ENCODE measurements at regions of chr6 and their contacts with region 1.

Region 1: DNA sequence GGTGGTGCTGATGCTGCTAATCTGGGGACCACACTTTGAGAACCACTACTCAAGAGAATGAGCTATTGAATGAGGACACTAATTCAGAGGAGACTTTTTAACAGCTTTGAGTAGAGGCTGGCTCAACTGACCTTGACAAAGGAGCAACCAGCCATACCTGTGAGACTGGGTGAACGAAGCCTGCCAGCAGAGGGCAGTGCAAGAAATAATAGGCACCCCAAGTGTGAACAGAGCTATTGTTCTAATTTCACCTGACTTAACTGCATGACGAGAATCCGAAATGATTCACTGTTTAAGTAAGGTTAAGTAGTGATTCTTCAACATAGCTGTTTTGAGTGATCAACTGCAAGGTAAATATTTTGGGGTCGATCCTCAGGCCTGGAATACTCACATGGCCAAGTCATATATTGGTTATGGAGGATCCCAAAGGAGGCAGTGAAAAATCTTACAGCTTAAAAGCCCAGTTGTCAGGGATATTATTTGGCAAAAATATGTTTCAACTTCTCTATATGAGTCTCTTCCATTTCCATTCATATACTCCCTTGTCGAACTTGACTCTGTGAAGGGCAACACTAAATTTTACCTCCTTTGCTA is 550.5 kb upstream of the MARCKS start:
- DNase-seq: peak; percentile 57
- ATAC-seq: peak; percentile 100
- H3K4me3 ChIP-seq: no peak overlapping the region
- H3K27ac ChIP-seq: no peak overlapping the region
- H3K4me1 ChIP-seq: no peaks in the 10 kb centered on the region
- H3K27me3 ChIP-seq: no peaks in the 10 kb centered on the region
- CTCF ChIP-seq: peak; percentile 79 to 83 (median 81)
- EP300 ChIP-seq: no peak
- POLR2A ChIP-seq: no peak
- RAD21 ChIP-seq: peak; percentile 81

Region 2: GRCh38 chr6:112780498-112781096 is 526.1 kb before region 1 on chr6:
- CTCF ChIA-PET with region 1: interaction called, 3 read pairs
- POLR2A ChIA-PET with region 1: no interaction called
- RAD21 ChIA-PET with region 1: no interaction called
- SMC1A ChIA-PET with region 1: interaction called, 6 read pairs
- in situ Hi-C with region 1: no loop called
- intact Hi-C with region 1: loop called (anchors 2 kb)
- DNase-seq: peak; percentile 24
- ATAC-seq: peak; percentile 99
- H3K4me3 ChIP-seq: no peak overlapping the region
- H3K27ac ChIP-seq: no peak overlapping the region
- H3K4me1 ChIP-seq: no peaks in the 10 kb centered on the region
- H3K27me3 ChIP-seq: no peaks in the 10 kb centered on the region
- CTCF ChIP-seq: peak; percentile 67 to 82 (median 69)
- EP300 ChIP-seq: no peak
- POLR2A ChIP-seq: no peak
- RAD21 ChIP-seq: peak; percentile 95

Region 3: DNA sequence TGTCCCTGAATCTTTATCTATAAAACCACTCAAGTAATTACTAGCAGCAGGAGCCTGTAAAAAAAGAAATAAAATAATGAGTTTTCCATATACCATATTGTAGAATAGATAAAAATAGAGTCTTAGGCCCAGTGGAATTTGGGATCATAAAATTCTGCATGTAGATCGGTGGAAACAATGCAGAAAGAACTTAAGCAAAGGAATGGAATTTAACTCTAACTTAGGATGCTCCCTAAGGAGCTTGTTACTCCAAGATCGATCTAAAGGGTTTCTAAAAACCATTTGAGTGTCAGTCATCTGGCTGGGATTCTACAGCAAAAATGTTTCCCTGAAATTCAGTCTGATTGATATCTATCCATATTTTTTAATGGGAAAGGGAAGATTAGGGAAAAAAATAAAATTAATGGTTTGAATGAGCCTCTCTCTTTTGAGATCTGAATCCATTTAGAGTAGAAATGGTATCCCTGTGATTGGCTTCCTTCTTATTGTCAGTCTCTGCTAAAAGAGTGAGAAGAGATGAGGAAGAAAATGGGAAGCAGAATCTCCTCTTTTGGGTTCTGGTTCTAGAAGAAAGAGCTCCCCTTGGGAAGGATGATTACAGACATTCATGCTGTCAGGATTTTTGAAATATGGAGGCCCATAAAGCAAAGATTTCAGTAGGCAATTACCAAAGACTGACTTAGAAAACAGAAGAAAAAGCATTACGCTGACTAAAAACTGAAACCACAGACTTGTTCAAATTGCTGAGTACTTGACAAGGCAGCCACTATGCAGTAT is 13.8 kb before region 1 on chr6:
- CTCF ChIA-PET with region 1: interaction called, 17 read pairs
- POLR2A ChIA-PET with region 1: no interaction called
- RAD21 ChIA-PET with region 1: interaction called, 14 read pairs
- SMC1A ChIA-PET with region 1: interaction called, 6 read pairs
- in situ Hi-C with region 1: no loop called
- intact Hi-C with region 1: no loop called
- DNase-seq: peak; percentile 31
- ATAC-seq: peak; percentile 96
- H3K4me3 ChIP-seq: no peak overlapping the region
- H3K27ac ChIP-seq: no peak overlapping the region
- H3K4me1 ChIP-seq: no peaks in the 10 kb centered on the region; the same call in 1 of the 2 replicates
- H3K27me3 ChIP-seq: no peaks in the 10 kb centered on the region
- CTCF ChIP-seq: no peak
- EP300 ChIP-seq: peak; percentile 58 to 70; a peak in 2 of 4 replicates
- POLR2A ChIP-seq: no peak
- RAD21 ChIP-seq: no peak

Region 4: GRCh38 chr6:113381959-113382358 is 75.3 kb after region 1 on chr6:
- CTCF ChIA-PET with region 1: interaction called, 3 read pairs
- POLR2A ChIA-PET with region 1: no interaction called
- RAD21 ChIA-PET with region 1: interaction called, 7 read pairs
- SMC1A ChIA-PET with region 1: interaction called, 3 read pairs
- in situ Hi-C with region 1: no loop called
- intact Hi-C with region 1: loop called (anchors 5 kb)
- DNase-seq: peak; percentile 55
- ATAC-seq: peak; percentile 87
- H3K4me3 ChIP-seq: no peak overlapping the region
- H3K27ac ChIP-seq: no peak overlapping the region
- H3K4me1 ChIP-seq: no peaks in the 10 kb centered on the region
- H3K27me3 ChIP-seq: no peaks in the 10 kb centered on the region
- CTCF ChIP-seq: no peak
- EP300 ChIP-seq: peak; percentile 26 to 80; a peak in 1 of 4 replicates
- POLR2A ChIP-seq: no peak
- RAD21 ChIP-seq: no peak

Region 5: GRCh38 chr6:113626475-113626874 is 319.8 kb after region 1 on chr6:
- CTCF ChIA-PET with region 1: interaction called, 28 read pairs
- POLR2A ChIA-PET with region 1: no interaction called
- RAD21 ChIA-PET with region 1: interaction called, 31 read pairs
- SMC1A ChIA-PET with region 1: interaction called, 17 read pairs
- in situ Hi-C with region 1: loop called (anchors 5 kb)
- intact Hi-C with region 1: loop called (anchors 2 kb)
- DNase-seq: no peak
- ATAC-seq: peak; percentile 42
- H3K4me3 ChIP-seq: peak overlapping the region; percentile 25; the same call in 1 of the 2 replicates
- H3K27ac ChIP-seq: peak overlapping the region; percentile 100
- H3K4me1 ChIP-seq: peaks cover 68% of the 10 kb centered on the region
- H3K27me3 ChIP-seq: no peaks in the 10 kb centered on the region
- CTCF ChIP-seq: no peak; a peak in 1 of 6 replicates
- EP300 ChIP-seq: 0 out of 4 replicates have a peak, but pooled peaks of 1 of the 2 experiments have one; percentile 11
- POLR2A ChIP-seq: no peak
- RAD21 ChIP-seq: peak; percentile 39; the same call in 1 of the 2 replicates

Region 6: DNA sequence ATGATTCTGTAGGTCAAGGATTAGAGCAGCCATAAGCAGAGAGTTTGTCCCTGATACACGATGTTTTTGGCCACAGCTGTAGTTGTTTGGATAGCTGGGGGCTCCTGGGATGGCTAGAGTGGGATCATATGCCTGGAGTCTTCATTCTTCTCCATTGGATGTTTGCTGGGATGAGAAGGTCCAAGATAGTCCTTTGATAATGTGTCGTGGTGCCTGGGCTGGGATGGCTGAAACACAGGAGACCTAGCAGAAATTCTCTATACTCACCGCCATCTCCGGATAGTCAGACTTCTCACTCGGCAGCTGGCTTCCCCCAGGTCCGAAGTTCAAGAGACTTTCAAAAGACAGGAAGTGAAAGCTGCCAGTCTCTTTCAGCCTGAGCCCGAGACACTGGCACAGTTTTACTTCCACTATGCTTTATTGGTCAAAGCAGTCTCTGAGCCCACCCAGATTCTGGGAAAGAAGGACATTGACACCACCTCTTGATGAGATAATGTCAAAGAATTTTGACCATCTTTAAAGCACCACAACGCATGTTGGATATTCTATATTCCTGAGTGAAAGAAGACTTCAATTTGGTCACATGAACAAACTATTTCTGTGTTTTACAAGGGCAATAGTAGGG is 566.5 kb after region 1 on chr6:
- CTCF ChIA-PET with region 1: interaction called, 90 read pairs
- POLR2A ChIA-PET with region 1: no interaction called
- RAD21 ChIA-PET with region 1: interaction called, 37 read pairs
- SMC1A ChIA-PET with region 1: interaction called, 52 read pairs
- in situ Hi-C with region 1: no loop called
- intact Hi-C with region 1: no loop called
- DNase-seq: no peak
- ATAC-seq: peak; percentile 89
- H3K4me3 ChIP-seq: peak overlapping the region; percentile 65
- H3K27ac ChIP-seq: no peak overlapping the region; the same call in 1 of the 2 replicates
- H3K4me1 ChIP-seq: peaks cover 7% of the 10 kb centered on the region
- H3K27me3 ChIP-seq: no peaks in the 10 kb centered on the region
- CTCF ChIP-seq: peak in 1 of 3 experiments; percentile 17; a peak in 2 of 6 replicates
- EP300 ChIP-seq: peak; percentile 48 to 67; a peak in 2 of 4 replicates
- POLR2A ChIP-seq: no peak
- RAD21 ChIP-seq: 0 out of 2 replicates have a peak, but pooled peaks have one; percentile 21